Left cardiac atrium (tissue), 4 donors: ENCODE measurements at regions of chr9 and their contacts with region 1.

Region 1: DNA sequence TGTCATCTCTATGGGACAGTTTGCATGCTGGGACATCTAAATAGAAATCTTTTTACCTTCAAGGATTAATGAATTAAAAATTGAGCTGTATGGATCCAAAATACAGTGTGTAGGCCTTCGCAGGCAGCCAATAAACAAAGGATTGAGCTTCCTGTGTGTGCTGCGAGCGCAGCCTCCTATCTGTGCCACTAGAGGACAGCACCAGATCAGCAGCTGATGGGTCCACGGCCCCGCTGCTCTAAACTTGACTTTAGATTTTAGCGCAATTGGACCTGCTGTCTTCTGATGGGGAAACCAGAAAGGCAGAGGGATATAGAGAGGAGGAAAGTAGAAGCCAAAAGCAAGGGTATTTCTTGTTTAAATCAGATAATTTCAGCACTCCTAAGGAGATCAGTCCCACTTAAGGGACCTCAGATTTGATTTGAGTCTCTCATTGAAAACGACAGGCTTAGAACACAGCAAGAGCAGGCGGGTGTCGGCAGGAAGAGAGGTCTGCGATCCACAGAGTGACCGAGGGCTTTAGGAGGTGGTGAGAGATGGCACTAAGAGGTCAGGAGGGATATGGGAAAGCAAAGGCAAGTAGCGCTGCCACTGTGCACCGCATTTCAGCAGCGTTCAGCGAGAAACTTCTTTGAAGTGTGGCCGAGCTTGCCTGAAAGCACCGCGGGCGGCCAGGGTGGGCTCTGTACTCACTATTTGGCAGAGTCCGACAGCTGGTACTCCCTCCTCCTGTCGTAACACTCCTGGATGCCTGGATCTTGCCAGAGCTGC is 214.3 kb downstream of the GNA14 start:
- DNase-seq: peak; percentile 69
- ATAC-seq: peak; percentile 79 to 82

Region 2: GRCh38 chr9:77751341-77752091 is 317.7 kb after region 1 on chr9:
- intact Hi-C with region 1: loop called in 1 of 2 experiments (anchors 5 kb)
- DNase-seq: peak; percentile 20
- ATAC-seq: peak; percentile 55 to 86

Region 3: GRCh38 chr9:78035383-78035993 is 601.6 kb after region 1 on chr9:
- intact Hi-C with region 1: loop called in 1 of 2 experiments (anchors 10 kb)
- DNase-seq: peak; percentile 46
- ATAC-seq: peak in 1 of 2 donors; percentile 11